ENCODE measurements at regions of chr16 and their contacts with region 1.

Region 1: GRCh38 chr16:12067714-12068401 is 91.3 kb downstream of the SNX29 start:
- DNase-seq: peak; percentile 82
- H3K4me3 ChIP-seq: no peak overlapping the region
- H3K27ac ChIP-seq: no peak overlapping the region
- H3K4me1 ChIP-seq: no peaks in the 10 kb centered on the region
- CTCF ChIP-seq: peak; percentile 97

Region 2: DNA sequence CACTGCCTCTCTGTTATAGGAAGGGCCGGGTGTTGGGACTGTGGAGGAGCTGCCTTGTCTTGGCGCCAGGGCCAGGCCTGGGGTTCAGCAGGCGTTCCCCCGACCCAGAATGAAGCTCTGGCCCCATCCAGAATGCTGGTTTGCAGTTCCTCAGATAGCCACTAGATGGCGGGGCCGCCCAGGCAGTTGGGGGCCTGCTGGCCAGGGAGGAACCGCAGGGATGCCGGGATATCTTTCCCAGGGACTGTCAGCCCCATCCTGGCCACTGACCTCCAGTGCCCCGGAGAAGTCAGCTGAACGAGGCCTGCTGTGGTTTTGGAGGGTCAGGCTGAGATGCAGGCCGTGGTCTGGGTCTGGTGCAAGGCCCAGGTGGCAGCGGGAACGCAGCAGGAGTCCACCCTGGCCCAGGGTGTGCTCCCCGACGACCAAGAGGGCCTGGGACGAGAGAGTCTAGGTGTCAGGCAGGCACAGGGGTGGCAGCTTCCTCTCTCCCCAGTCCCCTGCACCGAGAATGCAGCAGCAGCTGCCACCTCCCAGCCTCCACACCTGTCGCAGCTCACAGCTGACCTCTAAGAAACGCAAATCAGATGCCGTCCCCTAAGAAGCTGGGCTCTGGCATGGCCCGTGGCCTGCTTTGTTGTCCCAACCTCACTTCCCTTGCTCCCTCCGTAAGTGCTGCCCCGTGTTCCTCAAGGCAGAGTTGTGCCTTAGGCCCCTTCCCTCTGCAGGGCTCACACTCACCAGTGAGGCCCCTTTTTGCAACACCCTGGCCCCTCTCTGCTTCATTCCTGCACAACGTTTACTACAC is 671.4 kb before region 1 on chr16:
- CTCF ChIA-PET with region 1: no interaction called
- POLR2A ChIA-PET with region 1: no interaction called
- intact Hi-C with region 1: loop called (anchors 10 kb)
- DNase-seq: peak; percentile 66
- H3K4me3 ChIP-seq: no peak overlapping the region
- H3K27ac ChIP-seq: no peak overlapping the region
- H3K4me1 ChIP-seq: no peaks in the 10 kb centered on the region
- CTCF ChIP-seq: peak; percentile 98

Region 3: GRCh38 chr16:11871193-11871592 is 196.7 kb before region 1 on chr16:
- CTCF ChIA-PET with region 1: no interaction called
- POLR2A ChIA-PET with region 1: no interaction called
- intact Hi-C with region 1: loop called (anchors 5 kb)
- DNase-seq: no peak
- H3K4me3 ChIP-seq: no peak overlapping the region
- H3K27ac ChIP-seq: no peak overlapping the region
- H3K4me1 ChIP-seq: no peaks in the 10 kb centered on the region
- CTCF ChIP-seq: peak; percentile 65

Region 4: GRCh38 chr16:11949527-11949926 is 118.3 kb before region 1 on chr16:
- CTCF ChIA-PET with region 1: interaction called, 7 read pairs
- POLR2A ChIA-PET with region 1: no interaction called
- intact Hi-C with region 1: loop called (anchors 1 kb)
- DNase-seq: peak; percentile 87
- H3K4me3 ChIP-seq: no peak overlapping the region
- H3K27ac ChIP-seq: no peak overlapping the region
- H3K4me1 ChIP-seq: peaks cover 18% of the 10 kb centered on the region
- CTCF ChIP-seq: peak; percentile 88